ENCODE measurements at regions of chr5 and their contacts with region 1.

Region 1: GRCh38 chr5:131170540-131171275 is at the start of gene LYRM7:
- DNase-seq: peak; percentile 93 to 97
- H3K4me3 ChIP-seq: peak within 1 kb of the TSS; percentile 53 to 82 (median 69)
- H3K27ac ChIP-seq: peak within 1 kb of the TSS; percentile 79 to 88
- H3K4me1 ChIP-seq: peaks cover 0 to 4% of the 10 kb centered on the region in 2 donors
- H3K27me3 ChIP-seq: no peaks in the 10 kb centered on the region
- CTCF ChIP-seq: peak in 1 of 3 donors; percentile 26
- POLR2A ChIP-seq: no peak
- total RNA-seq, gene LYRM7: 5.9 to 20.3 (median 15.8) TPM

Region 2: GRCh38 chr5:130605234-130605633 is 565.5 kb before region 1 on chr5:
- intact Hi-C with region 1: no loop called
- DNase-seq: no peak
- H3K4me3 ChIP-seq: no peak overlapping the region
- H3K27ac ChIP-seq: no peak overlapping the region
- H3K4me1 ChIP-seq: no peaks in the 10 kb centered on the region
- H3K27me3 ChIP-seq: no peaks in the 10 kb centered on the region
- CTCF ChIP-seq: no peak
- POLR2A ChIP-seq: no peak

Region 3: DNA sequence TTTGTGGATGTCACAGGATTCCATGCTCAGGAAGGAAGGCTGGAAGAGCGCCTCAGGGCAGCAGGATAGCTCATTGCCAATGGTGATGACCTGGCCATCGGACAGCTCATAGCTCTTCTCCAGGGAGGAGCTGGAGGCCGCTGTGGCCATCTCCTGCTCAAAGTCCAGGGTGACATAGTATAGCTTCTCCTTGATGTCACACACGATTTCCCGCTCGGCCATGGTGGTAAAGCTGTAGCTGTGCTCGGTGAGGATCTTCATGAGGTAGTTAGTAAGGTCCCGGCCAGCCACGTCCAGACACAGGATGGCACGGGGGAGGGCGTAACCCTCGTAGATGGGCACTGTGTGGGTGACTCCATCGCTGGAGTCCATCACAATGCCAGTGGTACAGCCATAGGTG is 488.6 kb after region 1 on chr5:
- intact Hi-C with region 1: loop called (anchors 5 kb)
- DNase-seq: no peak
- H3K4me3 ChIP-seq: no peak overlapping the region
- H3K27ac ChIP-seq: no peak overlapping the region
- H3K4me1 ChIP-seq: peaks cover 0 to 6% of the 10 kb centered on the region in 2 donors
- H3K27me3 ChIP-seq: no peaks in the 10 kb centered on the region
- CTCF ChIP-seq: no peak
- POLR2A ChIP-seq: no peak